Heart right ventricle (tissue), 16 donors: ENCODE measurements at regions of chr12 and their contacts with region 1.

Region 1: DNA sequence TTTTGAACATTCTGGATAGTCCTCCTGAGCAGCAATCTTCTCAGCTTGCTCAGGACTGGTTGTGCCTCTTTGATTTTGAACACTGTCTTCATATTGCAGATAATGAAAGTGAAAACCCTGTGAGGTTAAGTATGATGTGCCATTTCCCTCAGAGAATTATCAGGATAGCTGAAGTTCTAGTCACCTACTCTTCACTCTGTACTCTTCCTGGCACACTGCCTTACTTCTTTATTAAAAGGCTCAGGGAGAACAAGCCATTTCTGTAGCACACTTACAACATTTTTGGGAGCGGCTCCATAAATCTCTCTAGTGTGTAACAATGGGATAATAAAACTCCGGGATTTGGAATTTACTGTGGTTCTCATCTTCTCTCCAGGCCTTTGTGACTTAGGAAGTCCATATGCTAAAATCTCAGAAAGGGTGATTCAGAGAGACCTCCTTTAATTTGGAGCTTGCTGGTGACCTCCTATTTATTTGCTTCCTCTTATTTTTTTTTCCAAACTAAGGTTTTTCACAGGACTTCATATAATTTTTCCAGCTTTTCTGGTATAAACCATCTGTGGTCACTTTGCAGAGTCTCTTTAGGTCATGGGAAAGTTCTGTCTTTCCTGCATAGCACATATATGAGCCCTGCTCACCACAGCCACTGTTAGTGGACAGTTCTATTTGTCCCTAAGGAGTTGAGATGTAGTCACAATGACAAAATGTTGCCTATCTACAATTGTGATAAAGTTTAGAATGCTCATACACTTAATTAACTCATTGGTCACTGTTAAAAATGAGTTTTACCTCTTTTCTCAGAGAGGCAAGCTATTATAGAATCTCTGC is 53.5 kb upstream of the LDHB start:
- DNase-seq: no peak
- ATAC-seq: peak in 7 of 8 donors; percentile 46 to 92 (median 59)
- H3K4me3 ChIP-seq: no peak overlapping the region
- H3K27ac ChIP-seq: peak overlapping the region in 9 of 10 donors; percentile 8 to 73 (median 52)
- H3K4me1 ChIP-seq: peaks cover 0 to 19% (median 15%) of the 10 kb centered on the region in 9 donors
- H3K27me3 ChIP-seq: no peaks in the 10 kb centered on the region
- CTCF ChIP-seq: no peak

Region 2: GRCh38 chr12:21234395-21234794 is 476.8 kb before region 1 on chr12:
- intact Hi-C with region 1: no loop called
- DNase-seq: no peak
- ATAC-seq: no peak
- H3K4me3 ChIP-seq: no peak overlapping the region
- H3K27ac ChIP-seq: no peak overlapping the region
- H3K4me1 ChIP-seq: no peaks in the 10 kb centered on the region
- H3K27me3 ChIP-seq: no peaks in the 10 kb centered on the region
- CTCF ChIP-seq: no peak

Region 3: GRCh38 chr12:21764065-21764464 is 52.9 kb after region 1 on chr12:
- intact Hi-C with region 1: loop called in 2 of 10 experiments (anchors 5 to 10 kb)
- DNase-seq: no peak
- ATAC-seq: no peak
- H3K4me3 ChIP-seq: no peak overlapping the region
- H3K27ac ChIP-seq: peak overlapping the region in 1 of 10 donors; percentile 33
- H3K4me1 ChIP-seq: peaks cover 0 to 15% (median 0%) of the 10 kb centered on the region in 9 donors
- H3K27me3 ChIP-seq: no peaks in the 10 kb centered on the region
- CTCF ChIP-seq: no peak

Region 4: GRCh38 chr12:21818627-21819026 is 107.5 kb after region 1 on chr12:
- intact Hi-C with region 1: loop called in 1 of 10 experiments (anchors 10 kb)
- DNase-seq: no peak
- ATAC-seq: peak in 5 of 8 donors; percentile 40 to 67 (median 48)
- H3K4me3 ChIP-seq: no peak overlapping the region
- H3K27ac ChIP-seq: peak overlapping the region in 5 of 10 donors; percentile 6 to 63 (median 55)
- H3K4me1 ChIP-seq: peaks cover 0 to 54% (median 12%) of the 10 kb centered on the region in 9 donors
- H3K27me3 ChIP-seq: no peaks in the 10 kb centered on the region
- CTCF ChIP-seq: no peak

Region 5: DNA sequence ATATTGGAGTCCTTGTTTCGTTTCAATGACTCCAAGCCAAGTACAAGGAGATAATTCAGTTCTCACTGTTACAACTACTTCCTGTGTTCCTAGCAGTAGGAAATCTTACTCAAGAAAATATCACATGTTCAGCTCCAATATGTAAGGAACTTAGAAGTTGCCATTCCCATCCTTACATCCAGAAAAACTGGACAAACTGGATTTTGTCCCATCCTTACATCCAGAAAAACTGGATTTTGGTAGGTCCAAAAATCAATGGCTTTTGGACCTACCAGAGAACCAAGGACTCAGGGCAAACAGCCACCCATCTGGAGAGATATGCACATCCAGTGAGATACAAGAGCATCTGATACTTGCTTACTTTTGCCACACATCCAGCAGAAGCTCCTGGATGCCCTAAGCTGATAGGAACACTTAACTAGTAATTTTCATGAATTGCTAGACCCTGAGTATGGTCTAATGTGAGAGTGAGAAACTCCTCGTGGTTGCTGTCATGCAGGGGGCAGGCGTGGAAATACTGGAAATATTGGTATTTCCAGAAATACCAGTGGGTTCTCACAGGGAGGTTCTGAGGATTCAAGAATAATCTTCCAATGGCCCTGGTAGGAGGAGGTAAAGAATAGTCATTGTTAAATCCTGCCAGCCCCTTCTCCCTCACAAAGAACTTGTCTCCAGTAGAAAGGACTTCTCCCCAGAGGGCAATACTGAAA is 358.8 kb after region 1 on chr12:
- intact Hi-C with region 1: no loop called
- DNase-seq: no peak
- ATAC-seq: no peak
- H3K4me3 ChIP-seq: no peak overlapping the region
- H3K27ac ChIP-seq: no peak overlapping the region
- H3K4me1 ChIP-seq: no peaks in the 10 kb centered on the region
- H3K27me3 ChIP-seq: no peaks in the 10 kb centered on the region
- CTCF ChIP-seq: no peak